ENCODE measurements at regions of chr16 and their contacts with region 1.

Region 1: DNA sequence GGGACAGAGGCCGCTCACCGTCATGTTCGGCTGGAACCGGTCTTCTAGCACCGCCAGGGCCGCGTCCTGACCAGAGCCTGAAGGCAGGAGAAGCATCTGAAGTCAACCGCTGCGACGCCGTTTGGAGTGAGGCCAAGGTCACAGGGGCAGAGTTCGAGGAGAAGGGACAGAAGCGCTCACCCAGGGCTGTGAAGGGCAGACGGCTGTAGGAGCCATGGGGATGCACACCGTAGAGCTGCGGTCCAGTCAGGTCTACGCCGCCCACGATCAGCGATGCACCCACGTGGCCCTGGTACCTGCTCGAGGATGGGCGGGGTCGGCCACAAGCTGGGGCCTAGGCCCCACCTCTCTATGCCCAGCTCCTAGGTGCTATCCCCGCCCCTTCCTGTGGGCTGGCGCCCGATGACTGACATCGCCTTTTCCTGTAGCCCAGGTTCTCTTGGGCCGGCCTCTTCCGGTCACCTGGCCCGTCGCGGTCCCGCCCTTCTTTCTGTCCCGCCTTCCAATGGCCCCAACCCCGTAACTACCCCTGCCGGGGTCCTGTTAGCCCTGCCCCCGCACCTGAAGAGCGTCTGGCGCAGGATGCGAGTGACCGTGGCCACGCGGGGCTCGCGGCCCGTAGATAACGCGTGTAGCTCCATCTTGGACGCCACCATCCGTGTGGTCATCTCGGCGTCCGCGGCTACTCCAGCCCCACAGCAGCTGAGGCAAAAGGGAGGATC is 1.1 kb downstream of the PSMB10 start:
- DNase-seq: peak; percentile 98
- H3K4me3 Mint-ChIP-seq: peak overlapping the region; percentile 100
- H3K27ac Mint-ChIP-seq: peak overlapping the region; percentile 98
- H3K4me1 Mint-ChIP-seq: peaks cover 32% of the 10 kb centered on the region
- H3K27me3 Mint-ChIP-seq: no peaks in the 10 kb centered on the region
- CTCF ChIP-seq: no peak

Region 2: DNA sequence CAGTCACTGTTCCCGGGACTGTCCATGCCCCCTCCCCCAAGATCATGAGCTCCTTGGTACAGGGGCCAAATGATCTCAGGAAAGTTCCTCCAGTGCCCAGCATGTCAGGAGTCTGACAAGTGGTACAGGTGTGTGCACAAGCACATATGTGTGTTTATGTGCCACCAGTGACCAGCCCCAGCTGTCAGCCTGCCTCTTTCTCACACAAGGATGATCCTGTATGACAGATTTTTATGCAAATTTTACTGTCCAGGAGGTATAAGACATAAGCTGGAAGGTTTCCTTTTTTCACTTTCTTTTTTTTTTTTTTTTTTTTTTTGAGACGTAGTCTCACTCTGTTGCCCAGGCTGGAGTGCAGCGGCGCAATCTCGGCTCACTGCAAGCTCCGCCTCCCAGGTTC is 185.1 kb before region 1 on chr16:
- CTCF ChIA-PET with region 1: no interaction called
- POLR2A ChIA-PET with region 1: no interaction called
- intact Hi-C with region 1: no loop called
- DNase-seq: no peak
- H3K4me3 Mint-ChIP-seq: no peak overlapping the region
- H3K27ac Mint-ChIP-seq: peak overlapping the region; percentile 18
- H3K4me1 Mint-ChIP-seq: peaks cover 6% of the 10 kb centered on the region
- H3K27me3 Mint-ChIP-seq: no peaks in the 10 kb centered on the region
- CTCF ChIP-seq: no peak

Region 3: DNA sequence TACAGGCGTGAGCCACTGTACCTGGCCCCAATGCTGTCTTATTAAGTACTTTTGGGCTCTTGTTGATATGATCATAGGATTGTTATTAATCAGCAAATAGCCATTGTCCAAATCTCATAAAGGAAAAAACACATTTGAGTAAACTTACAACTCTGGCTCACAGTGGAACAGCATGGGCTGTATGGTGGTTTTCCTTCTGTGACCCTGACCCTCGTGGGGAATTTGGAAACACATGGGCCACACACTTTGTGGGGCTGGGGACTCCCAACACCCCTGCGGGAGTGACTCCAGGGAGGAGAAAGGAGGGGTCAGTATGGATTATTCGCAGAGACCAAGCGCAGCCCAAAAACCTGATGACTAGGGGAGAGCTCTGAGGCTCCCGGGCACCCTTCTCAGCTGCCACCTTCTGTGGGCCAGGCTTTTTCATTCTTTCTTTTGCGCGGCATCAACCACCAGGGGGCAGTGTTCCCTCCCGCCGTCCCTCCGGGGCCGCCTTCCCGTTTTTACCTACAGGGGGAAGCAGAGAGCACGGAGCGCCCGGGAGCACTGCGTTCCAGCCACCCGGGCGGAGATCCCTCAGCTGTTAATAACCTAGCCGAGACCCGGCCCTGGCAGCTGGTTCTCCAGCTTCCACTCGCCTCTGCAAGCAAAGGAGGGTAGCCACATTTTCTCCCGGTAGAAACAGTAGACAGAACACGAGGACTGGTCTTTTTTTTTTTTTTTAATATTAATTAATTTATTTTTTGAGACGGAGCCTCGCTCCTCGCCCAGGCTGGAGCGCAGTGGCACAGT is 119.1 kb before region 1 on chr16:
- CTCF ChIA-PET with region 1: interaction called, 22 read pairs
- POLR2A ChIA-PET with region 1: interaction called, 19 read pairs
- intact Hi-C with region 1: no loop called
- DNase-seq: peak; percentile 75
- H3K4me3 Mint-ChIP-seq: no peak overlapping the region
- H3K27ac Mint-ChIP-seq: no peak overlapping the region
- H3K4me1 Mint-ChIP-seq: no peaks in the 10 kb centered on the region
- H3K27me3 Mint-ChIP-seq: no peaks in the 10 kb centered on the region
- CTCF ChIP-seq: peak; percentile 98

Region 4: DNA sequence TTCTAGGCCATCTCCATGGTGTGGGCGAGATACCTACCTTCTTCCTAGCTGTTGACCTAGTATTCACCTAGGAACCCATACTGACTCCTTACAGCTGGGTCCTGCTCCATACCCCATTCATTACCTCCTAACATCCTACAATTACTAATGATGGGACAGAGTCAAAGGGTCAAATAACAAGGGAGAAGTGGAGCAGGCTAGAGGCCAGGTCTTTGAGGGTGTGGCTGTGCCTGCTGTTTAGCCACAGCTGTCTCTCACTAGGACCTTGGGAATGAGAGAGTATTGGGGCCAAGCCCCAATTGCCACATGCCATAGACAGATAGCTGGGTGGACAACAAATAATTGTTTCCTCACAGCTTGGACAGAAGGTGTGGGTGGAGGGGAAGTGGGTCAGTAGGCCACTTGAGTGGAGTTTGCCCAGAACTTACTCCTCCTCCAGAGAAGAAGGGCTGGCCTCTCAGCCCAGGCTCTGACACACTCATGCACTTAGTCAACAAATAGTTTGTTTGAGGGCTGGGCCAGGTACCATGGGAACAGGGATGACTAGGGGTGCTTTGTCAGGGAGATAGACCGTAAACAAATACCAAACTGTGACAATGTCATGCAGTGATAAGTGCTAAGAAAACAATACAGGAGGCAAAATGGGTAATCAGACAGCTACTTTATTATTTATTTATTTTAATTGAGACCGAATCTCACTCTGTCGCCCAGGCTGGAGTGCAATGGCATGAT is 77.9 kb before region 1 on chr16:
- CTCF ChIA-PET with region 1: no interaction called
- POLR2A ChIA-PET with region 1: interaction called, 12 read pairs
- intact Hi-C with region 1: no loop called
- DNase-seq: peak; percentile 90
- H3K4me3 Mint-ChIP-seq: peak overlapping the region; percentile 54
- H3K27ac Mint-ChIP-seq: peak overlapping the region; percentile 99
- H3K4me1 Mint-ChIP-seq: peaks cover 38% of the 10 kb centered on the region
- H3K27me3 Mint-ChIP-seq: no peaks in the 10 kb centered on the region
- CTCF ChIP-seq: no peak

Region 5: DNA sequence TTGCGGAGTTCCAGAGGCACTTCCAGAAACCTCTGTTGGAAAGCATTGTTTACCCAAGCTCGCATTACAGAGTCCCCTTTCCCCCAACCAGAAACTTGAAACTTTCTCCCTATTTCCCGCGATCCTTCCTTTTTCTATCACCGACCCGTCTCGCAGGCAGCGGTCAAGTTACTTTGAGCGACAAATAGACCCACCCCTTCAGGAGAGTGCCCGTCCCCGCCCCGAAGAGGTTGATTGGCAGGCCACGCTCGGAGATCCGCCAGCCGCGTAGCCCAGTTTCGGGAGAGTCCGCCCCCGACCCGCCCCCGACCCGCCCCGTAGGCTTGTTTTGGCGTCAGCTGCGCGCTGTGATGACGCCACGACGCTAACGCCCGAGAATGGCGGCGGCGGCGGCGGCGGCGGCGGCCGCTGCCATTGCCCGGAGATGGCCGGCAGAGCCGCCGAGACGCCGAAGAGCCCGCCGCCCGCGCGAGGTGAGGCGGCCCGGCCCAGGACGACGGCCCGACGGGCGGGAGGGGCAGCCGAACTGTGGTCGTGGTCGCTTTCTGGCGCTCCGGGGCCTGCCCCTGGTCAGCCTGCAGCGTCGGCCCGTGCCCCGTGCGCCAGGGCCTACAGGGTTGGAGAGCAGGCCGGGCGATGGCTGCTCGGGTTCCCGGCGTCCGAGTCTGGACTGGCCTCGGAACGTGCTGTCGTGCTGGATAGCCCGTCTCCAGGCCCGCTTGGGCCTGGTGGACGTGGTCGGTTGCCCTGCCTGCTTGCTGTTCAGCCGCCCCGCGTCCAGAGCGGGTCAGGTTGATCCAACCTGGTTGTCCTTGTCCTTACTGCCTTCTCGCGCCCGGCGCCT is 42.4 kb before region 1 on chr16 and contains the start of gene PSKH1:
- CTCF ChIA-PET with region 1: interaction called, 5 read pairs
- POLR2A ChIA-PET with region 1: interaction called, 26 read pairs
- intact Hi-C with region 1: no loop called
- DNase-seq: peak; percentile 96
- H3K4me3 Mint-ChIP-seq: peak within 1 kb of the TSS; percentile 92
- H3K27ac Mint-ChIP-seq: peak within 1 kb of the TSS; percentile 92
- H3K4me1 Mint-ChIP-seq: peaks cover 13% of the 10 kb centered on the region
- H3K27me3 Mint-ChIP-seq: no peaks in the 10 kb centered on the region
- CTCF ChIP-seq: no peak
- total RNA-seq, gene PSKH1: 21.7 and 27.9 TPM in 2 replicates

Region 6: DNA sequence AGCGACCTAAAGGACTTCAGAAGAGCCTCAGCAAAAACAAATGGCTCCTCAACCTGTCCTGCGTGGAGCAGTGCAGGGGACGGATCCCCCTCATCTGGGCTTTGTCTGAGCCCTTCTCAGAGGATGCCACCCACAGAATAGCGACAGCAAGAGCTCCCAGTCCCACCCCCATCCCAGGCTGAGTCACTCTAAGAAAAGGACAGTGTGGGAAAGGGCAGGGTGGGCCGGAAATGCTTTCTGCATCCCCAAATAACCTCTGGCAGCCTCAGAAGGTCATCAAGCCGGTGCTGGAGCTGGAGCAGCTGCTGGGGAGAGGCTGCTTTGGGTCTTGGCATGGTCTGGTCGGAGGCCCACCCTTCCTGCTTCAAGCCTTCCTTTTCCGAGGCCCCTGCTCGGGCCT is 24.0 kb after region 1 on chr16:
- CTCF ChIA-PET with region 1: interaction called, 5 read pairs
- POLR2A ChIA-PET with region 1: interaction called, 45 read pairs
- intact Hi-C with region 1: no loop called
- DNase-seq: peak; percentile 67
- H3K4me3 Mint-ChIP-seq: no peak overlapping the region
- H3K27ac Mint-ChIP-seq: no peak overlapping the region
- H3K4me1 Mint-ChIP-seq: peaks cover 41% of the 10 kb centered on the region
- H3K27me3 Mint-ChIP-seq: no peaks in the 10 kb centered on the region
- CTCF ChIP-seq: no peak

Region 7: GRCh38 chr16:68040507-68041288 is 105.1 kb after region 1 on chr16:
- CTCF ChIA-PET with region 1: interaction called, 6 read pairs
- POLR2A ChIA-PET with region 1: interaction called, 4 read pairs
- intact Hi-C with region 1: loop called (anchors 2 kb)
- DNase-seq: peak; percentile 81
- H3K4me3 Mint-ChIP-seq: no peak overlapping the region
- H3K27ac Mint-ChIP-seq: no peak overlapping the region
- H3K4me1 Mint-ChIP-seq: no peaks in the 10 kb centered on the region
- H3K27me3 Mint-ChIP-seq: no peaks in the 10 kb centered on the region
- CTCF ChIP-seq: peak; percentile 89

Region 8: DNA sequence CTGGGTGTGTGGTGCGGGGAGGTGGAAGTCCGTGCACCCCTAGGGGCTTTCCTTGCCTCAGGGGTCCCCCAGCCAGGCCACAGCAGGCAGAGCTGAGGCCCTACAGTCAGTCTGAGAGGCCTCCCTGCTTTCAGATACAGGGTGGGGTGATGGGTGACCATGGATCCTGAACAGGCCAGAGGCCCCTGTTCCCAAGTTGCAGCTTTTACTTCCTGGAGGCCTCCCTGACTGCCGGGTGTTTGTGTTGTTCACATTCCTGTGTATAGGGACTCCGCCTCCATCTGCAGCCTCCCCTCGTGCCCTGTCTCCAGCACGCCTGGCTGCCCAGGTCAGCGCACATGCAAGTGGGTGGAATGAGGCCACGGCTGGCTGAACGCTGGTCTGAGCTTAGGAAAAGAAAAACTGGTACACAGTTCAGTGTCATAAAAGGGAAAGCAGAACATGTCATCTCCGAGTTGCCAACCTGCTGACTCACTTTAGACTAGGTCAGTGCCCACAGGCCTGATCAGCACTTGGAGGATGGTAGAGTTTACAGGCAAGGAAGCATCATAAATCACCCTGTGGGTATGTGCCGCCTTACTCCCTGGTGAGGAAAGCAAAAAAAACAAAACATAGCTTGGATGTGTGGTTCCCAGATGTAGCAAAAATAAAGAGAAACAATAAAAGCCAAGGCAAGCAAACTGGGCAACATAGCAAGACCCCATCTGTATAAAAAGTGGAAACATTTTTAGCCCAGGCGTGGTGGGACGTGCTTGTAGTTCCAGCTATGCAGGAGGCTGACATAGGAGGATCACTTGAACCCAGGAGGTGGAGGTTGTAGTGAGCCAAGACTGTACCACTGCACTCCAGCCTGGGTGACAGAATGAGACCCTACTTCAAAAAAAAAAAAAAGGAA is 322.6 kb after region 1 on chr16:
- CTCF ChIA-PET with region 1: no interaction called
- POLR2A ChIA-PET with region 1: no interaction called
- intact Hi-C with region 1: no loop called
- DNase-seq: peak; percentile 67
- H3K4me3 Mint-ChIP-seq: no peak overlapping the region
- H3K27ac Mint-ChIP-seq: peak overlapping the region; percentile 14
- H3K4me1 Mint-ChIP-seq: peaks cover 10% of the 10 kb centered on the region
- H3K27me3 Mint-ChIP-seq: no peaks in the 10 kb centered on the region
- CTCF ChIP-seq: no peak